Right ventricle myocardium inferior (tissue), 1 donor: ENCODE measurements at regions of chr18 and their contacts with region 1.

Region 1: DNA sequence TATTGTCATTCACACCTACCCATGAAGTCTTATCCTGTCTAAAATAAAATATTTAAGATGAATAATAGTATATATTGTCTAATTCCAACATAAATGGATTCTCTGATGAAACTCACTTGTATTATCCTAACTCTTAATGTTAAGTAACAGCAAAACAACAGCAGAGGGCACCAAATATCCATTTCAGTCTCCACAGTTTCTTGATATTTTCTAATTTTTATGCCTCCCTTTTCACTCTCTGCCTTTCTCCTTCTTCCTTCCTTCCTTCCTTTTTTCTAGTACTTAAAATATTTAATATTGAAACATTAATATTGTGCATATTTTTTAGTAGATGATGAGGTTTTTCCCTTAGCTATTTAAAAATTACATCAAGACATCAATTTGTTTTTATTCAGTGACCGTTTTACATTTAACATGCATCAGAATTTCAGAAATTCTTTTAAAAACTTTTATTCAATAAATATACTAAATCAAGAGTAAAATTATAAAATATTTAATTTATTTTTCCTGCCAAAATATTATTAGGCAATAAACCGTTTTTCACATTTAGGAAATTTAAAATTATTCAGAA is 97.6 kb downstream of the WDR7 start:
- DNase-seq: no peak
- ATAC-seq: no peak

Region 2: DNA sequence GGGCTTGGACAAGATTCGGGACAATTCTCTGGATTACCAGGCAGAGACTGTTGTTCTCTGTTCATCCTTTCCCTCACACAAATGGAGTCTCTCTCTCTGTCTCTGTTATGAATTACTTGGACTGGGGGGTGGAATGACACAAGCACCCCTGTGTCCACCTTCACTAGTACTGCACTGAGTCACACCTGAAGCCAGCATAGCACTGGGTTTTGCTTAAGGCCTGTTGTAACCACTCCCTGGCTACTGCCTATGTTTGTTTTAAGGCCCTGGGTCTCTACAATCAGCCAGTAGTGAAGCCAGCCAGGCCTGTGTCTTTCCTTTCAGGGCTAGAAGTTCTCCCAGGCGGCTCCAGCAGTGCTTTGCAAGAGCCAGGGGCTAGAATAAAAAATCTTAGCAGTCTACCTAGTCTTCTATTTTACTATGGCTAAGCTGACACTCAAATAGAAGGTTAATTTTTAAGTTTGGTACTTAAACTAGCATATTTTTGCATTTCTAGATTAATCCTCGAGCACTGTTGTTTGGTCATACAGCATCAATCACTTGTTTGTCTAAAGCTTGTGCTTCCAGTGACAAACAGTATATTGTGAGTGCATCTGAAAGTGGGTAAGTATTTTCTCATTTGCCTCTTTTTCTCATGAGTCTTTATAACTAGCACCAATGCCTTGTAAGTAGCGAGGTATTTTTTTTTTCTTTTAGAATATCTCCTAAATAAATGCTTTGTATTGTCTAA is 69.8 kb before region 1 on chr18:
- intact Hi-C with region 1: no loop called
- DNase-seq: no peak
- ATAC-seq: no peak

Region 3: DNA sequence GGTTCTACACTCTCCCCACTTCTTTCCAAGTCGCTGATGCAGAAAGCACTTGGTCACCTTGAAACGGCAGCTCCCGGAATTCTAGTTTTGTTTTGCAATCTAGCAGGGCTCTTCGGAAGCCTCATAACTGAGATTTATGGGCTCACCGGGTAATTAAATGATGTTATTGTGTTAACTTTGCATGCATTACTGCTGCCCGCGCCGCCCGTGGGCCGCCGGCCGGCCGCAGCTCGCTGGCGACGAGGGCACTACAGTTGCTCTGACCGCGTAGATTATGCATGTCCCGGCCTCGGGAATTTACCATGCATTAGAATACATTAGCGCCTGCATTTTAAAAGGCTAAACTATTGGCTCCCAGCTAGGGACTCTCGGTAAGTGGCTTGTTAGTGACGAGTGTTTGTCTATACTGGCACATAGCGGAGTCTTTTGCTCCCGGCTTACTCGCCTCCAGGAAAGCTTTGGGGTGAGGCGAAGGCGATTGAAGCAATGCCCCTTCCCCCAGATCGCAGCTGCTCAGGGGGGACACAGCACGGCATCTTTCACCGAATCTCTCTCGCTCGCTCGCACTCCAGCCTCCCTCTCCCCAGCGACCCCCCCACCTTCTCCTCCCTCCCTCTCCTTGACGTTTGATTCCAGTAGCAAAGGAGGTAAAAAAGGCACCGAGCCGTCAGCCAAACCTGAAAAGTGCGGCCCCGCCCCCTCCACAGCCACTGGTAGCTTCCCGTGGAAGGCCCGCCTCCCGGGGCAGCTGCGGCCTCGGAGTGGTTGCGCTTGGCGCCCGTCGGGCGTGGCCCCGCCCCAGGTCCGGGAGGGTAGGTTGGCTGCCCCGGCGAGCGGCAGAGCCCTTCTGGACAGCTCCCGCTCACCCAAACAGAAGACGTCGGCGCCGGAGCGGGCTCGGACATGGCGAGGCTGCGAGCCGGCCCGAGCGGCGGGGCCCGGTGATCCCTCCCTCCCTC is 686.0 kb after region 1 on chr18 and contains the start of gene ONECUT2:
- intact Hi-C with region 1: loop called (anchors 5 kb)
- DNase-seq: peak; percentile 93
- ATAC-seq: peak; percentile 97
- total RNA-seq, gene ONECUT2: 0.03 TPM